Heart left ventricle (tissue), 16 donors: ENCODE measurements at regions of chr1 and their contacts with region 1.

Region 1: DNA sequence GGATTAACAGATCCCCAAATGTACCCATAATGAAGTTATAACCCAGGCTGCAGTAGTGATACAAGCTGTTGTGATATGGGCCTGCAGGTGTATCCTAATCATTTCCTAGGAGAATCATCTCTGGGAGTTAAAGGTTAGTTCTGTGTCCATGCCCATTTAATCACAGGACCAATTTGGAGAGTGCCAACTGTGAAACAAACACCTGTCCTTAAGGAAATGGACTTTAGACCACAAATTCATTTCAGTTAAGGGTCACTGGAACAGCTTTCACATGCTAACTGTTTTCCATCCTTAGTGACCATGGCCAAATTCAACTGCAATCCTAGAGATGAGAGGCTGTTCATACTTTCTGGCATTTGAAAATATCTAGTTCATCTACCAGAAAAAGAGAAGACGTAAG is 160.9 kb downstream of the GPATCH2 start:
- DNase-seq: no peak
- ATAC-seq: no peak
- H3K4me3 ChIP-seq: no peak overlapping the region
- H3K27ac ChIP-seq: no peak overlapping the region
- H3K4me1 ChIP-seq: no peaks in the 10 kb centered on the region
- H3K27me3 ChIP-seq: no peaks in the 10 kb centered on the region
- CTCF ChIP-seq: no peak
- POLR2A ChIP-seq: no peak

Region 2: GRCh38 chr1:217982331-217983050 is 512.5 kb after region 1 on chr1:
- intact Hi-C with region 1: loop called in 1 of 10 experiments (anchors 10 kb)
- DNase-seq: no peak
- ATAC-seq: no peak
- H3K4me3 ChIP-seq: no peak overlapping the region
- H3K27ac ChIP-seq: no peak overlapping the region
- H3K4me1 ChIP-seq: no peaks in the 10 kb centered on the region
- H3K27me3 ChIP-seq: no peaks in the 10 kb centered on the region
- CTCF ChIP-seq: no peak
- POLR2A ChIP-seq: no peak